T-cell (primary cell): ENCODE measurements at regions of chr3 and their contacts with region 1.

Region 1: GRCh38 chr3:71724584-71725278 is 471 bp downstream of the EIF4E3 start:
- DNase-seq: peak in 15 of 35 experiments; percentile 9 to 51 (median 34)
- ATAC-seq: peak; percentile 14 to 50 (median 40)
- H3K4me3 ChIP-seq: peak overlapping the region; percentile 66 to 94
- H3K4me3 Mint-ChIP-seq: peak overlapping the region; percentile 68 to 96 (median 94)
- H3K27ac ChIP-seq: peak overlapping the region; percentile 80
- H3K27ac Mint-ChIP-seq: peak overlapping the region; percentile 94 to 96
- H3K4me1 ChIP-seq: peaks cover 43 to 62% of the 10 kb centered on the region in 2 experiments
- H3K4me1 Mint-ChIP-seq: peaks cover 68 to 76% (median 75%) of the 10 kb centered on the region in 3 donors
- H3K27me3 ChIP-seq: no peaks in the 10 kb centered on the region
- H3K27me3 Mint-ChIP-seq: no peaks in the 10 kb centered on the region

Region 2: GRCh38 chr3:71710906-71711494 is 13.7 kb before region 1 on chr3:
- CTCF ChIA-PET with region 1: interaction called, 10 to 13 read pairs
- POLR2A ChIA-PET with region 1: no interaction called
- DNase-seq: peak in 1 of 35 experiments; percentile 69
- ATAC-seq: peak; percentile 59 to 73 (median 62)
- H3K4me3 ChIP-seq: no peak overlapping the region
- H3K4me3 Mint-ChIP-seq: no peak overlapping the region
- H3K27ac ChIP-seq: no peak overlapping the region
- H3K27ac Mint-ChIP-seq: peak overlapping the region; percentile 15 to 62
- H3K4me1 ChIP-seq: peaks cover 12 to 16% of the 10 kb centered on the region in 2 experiments
- H3K4me1 Mint-ChIP-seq: peaks cover 76 to 92% (median 87%) of the 10 kb centered on the region in 3 donors
- H3K27me3 ChIP-seq: no peaks in the 10 kb centered on the region
- H3K27me3 Mint-ChIP-seq: no peaks in the 10 kb centered on the region